Dendritic cell treated with granulocyte-macrophage colony-stimulating factor and Interleukin-4, amounts not matched to agents 40 ng/mL and 50 ng/mL, for 4 days (primary cell): ENCODE measurements at regions of chr7 and their contacts with region 1.

Region 1: GRCh38 chr7:143240291-143241168 is 18.7 kb downstream of the TAS2R40 start:
- H3K4me3 Mint-ChIP-seq: peak overlapping the region; percentile 50
- H3K27ac Mint-ChIP-seq: peak overlapping the region; percentile 89
- H3K4me1 Mint-ChIP-seq: peaks cover 85% of the 10 kb centered on the region
- H3K27me3 Mint-ChIP-seq: no peaks in the 10 kb centered on the region

Region 2: GRCh38 chr7:143263266-143264195 is 23.0 kb after region 1 on chr7 and contains the start of gene GSTK1:
- intact Hi-C with region 1: loop called (anchors 2 kb)
- H3K4me3 Mint-ChIP-seq: peak within 1 kb of the TSS; percentile 92
- H3K27ac Mint-ChIP-seq: peak within 1 kb of the TSS; percentile 97
- H3K4me1 Mint-ChIP-seq: peaks cover 36% of the 10 kb centered on the region
- H3K27me3 Mint-ChIP-seq: no peaks in the 10 kb centered on the region

Region 3: GRCh38 chr7:143305423-143306070 is 65.0 kb after region 1 on chr7:
- intact Hi-C with region 1: loop called (anchors 1 kb)
- H3K4me3 Mint-ChIP-seq: no peak overlapping the region
- H3K27ac Mint-ChIP-seq: peak overlapping the region; percentile 49
- H3K4me1 Mint-ChIP-seq: peaks cover 82% of the 10 kb centered on the region
- H3K27me3 Mint-ChIP-seq: no peaks in the 10 kb centered on the region

Region 4: GRCh38 chr7:143380255-143380645 is 139.7 kb after region 1 on chr7:
- intact Hi-C with region 1: loop called (anchors 2 kb)
- H3K4me3 Mint-ChIP-seq: no peak overlapping the region
- H3K27ac Mint-ChIP-seq: peak overlapping the region; percentile 93
- H3K4me1 Mint-ChIP-seq: peaks cover 55% of the 10 kb centered on the region
- H3K27me3 Mint-ChIP-seq: no peaks in the 10 kb centered on the region

Region 5: GRCh38 chr7:143416565-143417149 is 176.1 kb after region 1 on chr7:
- intact Hi-C with region 1: loop called (anchors 2 kb)
- H3K4me3 Mint-ChIP-seq: no peak overlapping the region
- H3K27ac Mint-ChIP-seq: no peak overlapping the region
- H3K4me1 Mint-ChIP-seq: peaks cover 41% of the 10 kb centered on the region
- H3K27me3 Mint-ChIP-seq: no peaks in the 10 kb centered on the region

Region 6: DNA sequence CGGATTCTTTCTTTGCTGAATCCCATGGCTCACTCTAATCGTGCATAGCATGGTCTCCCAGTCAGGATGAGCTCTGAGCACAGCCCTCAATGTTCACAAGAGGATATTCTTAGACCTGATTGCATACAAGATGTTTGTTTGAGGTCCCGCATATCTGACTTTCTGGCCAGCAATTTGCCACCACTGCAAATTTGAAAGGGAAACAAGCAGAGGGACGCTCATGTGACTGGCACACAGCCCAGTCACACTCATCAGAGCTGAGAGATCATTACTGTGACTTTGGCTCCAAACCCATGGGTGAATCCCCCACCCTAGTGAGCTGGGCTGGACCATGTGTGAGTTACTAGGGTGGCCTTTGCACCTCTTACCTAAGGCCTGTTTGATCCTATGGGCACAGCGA is 247.0 kb after region 1 on chr7:
- intact Hi-C with region 1: loop called (anchors 5 kb)
- H3K4me3 Mint-ChIP-seq: no peak overlapping the region
- H3K27ac Mint-ChIP-seq: peak overlapping the region; percentile 83
- H3K4me1 Mint-ChIP-seq: peaks cover 66% of the 10 kb centered on the region
- H3K27me3 Mint-ChIP-seq: no peaks in the 10 kb centered on the region